ENCODE measurements at regions of chr4 and their contacts with region 1.

Region 1: DNA sequence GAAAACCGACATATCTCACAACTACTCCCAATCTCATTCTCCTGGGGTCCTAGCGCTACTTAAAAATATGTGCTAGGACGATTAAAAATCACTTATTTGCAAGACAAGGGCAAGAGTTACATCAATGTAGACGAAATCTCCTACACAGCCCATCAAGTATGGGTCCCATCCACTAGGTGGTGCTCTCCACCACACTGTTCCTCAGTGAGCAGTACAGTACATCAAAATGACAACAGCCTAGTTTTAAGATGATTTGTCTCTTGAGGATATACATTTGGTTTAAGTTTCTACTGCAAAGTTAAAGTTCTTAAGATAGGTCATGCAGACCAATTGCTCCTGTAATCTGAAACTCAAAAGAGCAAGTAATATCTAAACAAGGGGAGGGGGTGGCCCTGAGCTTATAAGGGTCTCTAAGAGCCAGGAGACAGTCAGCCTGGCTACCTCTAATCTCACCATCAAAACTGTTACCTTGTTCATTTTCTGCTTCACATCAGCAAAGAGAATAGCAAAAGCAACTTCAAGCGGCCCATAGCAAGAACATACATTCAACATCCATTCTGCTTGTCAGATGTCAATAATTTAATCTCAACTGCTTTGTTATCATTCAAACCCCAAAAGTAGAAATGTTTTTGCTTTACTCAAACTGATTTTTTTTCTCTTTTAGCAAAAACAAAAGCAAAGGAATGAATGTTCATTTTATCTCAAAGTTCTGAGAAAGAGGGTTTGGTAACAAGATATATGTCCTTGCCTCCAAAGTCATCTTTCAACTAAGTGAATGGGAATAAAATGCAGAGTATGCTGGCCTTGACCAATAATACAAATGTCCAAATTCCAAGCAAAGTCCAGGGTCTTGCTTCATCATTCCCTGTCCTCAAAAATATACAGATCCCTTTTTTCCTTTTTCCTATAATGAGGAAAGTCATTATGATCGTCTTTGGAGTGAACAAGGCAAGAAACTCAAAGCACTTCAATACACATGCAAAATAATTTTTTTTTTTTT is 53.1 kb downstream of the STX18 start:
- DNase-seq: peak; percentile 88
- H3K4me3 Mint-ChIP-seq: no peak overlapping the region
- H3K27ac Mint-ChIP-seq: no peak overlapping the region
- H3K4me1 Mint-ChIP-seq: peaks cover 8% of the 10 kb centered on the region
- H3K27me3 Mint-ChIP-seq: no peaks in the 10 kb centered on the region

Region 2: DNA sequence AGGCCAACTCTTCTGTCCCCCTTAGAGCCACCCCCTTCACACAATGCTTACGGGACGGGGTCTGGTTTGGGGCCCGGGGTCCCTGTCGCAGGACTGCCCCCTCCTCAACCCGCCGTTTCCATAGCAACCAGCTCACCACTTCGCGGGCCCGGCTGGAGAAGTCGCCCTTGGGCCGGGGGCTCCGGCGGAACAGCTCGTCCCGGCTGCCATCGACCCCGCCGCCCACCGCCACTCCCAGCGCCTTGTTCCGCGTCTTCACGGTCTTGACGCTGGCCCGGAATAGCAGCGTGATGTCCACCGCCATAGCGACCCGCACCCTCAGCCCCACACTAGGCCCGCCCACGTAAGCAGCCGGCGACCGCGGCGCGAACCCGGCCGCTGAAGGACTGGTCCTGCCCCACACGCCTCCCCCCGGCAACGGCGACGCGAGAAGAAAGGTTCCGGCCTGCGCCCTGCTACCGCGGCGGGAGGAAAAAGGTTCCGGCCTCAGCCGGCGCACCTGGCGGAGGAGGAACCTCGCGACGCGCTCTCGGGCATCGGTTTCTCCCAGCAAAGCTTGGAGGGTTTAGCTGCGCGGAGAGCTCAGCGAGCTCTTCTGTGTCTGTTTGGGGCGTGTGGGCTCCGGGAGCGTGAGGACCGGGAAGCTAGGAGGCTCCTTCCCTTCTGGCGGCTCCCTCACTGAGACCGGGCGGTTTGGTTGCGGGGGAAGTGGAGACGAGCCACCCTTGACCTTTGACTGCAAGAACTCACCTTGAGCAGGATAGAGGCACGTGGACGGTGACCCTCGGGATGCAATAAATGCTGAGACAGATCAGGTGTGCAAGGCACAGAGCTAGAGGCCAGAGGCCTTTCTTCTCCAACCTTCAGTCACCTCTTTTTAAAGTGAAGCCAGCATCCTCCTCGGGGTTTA is 53.2 kb after region 1 on chr4 and contains the start of gene STX18:
- CTCF ChIA-PET with region 1: no interaction called
- intact Hi-C with region 1: loop called (anchors 2 kb)
- DNase-seq: peak; percentile 89
- H3K4me3 Mint-ChIP-seq: peak within 1 kb of the TSS; percentile 92
- H3K27ac Mint-ChIP-seq: peak within 1 kb of the TSS; percentile 87
- H3K4me1 Mint-ChIP-seq: peaks cover 43% of the 10 kb centered on the region
- H3K27me3 Mint-ChIP-seq: no peaks in the 10 kb centered on the region
- total RNA-seq, gene STX18: 18.3 to 19.0 TPM

Region 3: DNA sequence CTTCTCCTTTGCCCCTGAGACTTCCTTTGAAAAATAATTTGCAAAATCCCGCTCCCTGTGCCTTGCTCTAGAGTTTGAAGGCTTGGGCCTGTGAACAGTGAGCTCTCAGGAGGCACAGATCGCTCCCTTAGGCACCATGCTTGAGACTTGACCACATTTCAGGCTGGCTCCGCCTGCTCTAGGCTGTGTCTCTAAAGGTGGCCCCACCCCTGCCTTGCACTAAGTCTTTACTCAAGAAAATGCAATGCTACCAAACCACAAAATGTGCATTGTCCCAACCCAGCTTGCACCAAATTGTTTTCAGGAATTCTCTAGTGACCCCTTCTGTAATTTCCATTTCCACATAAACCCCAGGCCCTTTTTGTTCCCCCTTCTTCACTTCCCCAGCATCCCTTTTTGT is 80.3 kb after region 1 on chr4:
- CTCF ChIA-PET with region 1: no interaction called
- intact Hi-C with region 1: no loop called
- DNase-seq: no peak
- H3K4me3 Mint-ChIP-seq: no peak overlapping the region
- H3K27ac Mint-ChIP-seq: no peak overlapping the region
- H3K4me1 Mint-ChIP-seq: no peaks in the 10 kb centered on the region
- H3K27me3 Mint-ChIP-seq: no peaks in the 10 kb centered on the region

Region 4: GRCh38 chr4:4659871-4660651 is 171.4 kb after region 1 on chr4:
- CTCF ChIA-PET with region 1: no interaction called
- intact Hi-C with region 1: loop called (anchors 10 kb)
- DNase-seq: no peak
- H3K4me3 Mint-ChIP-seq: no peak overlapping the region
- H3K27ac Mint-ChIP-seq: no peak overlapping the region
- H3K4me1 Mint-ChIP-seq: no peaks in the 10 kb centered on the region
- H3K27me3 Mint-ChIP-seq: no peaks in the 10 kb centered on the region

Region 5: GRCh38 chr4:4880492-4880891 is 391.8 kb after region 1 on chr4:
- CTCF ChIA-PET with region 1: no interaction called
- intact Hi-C with region 1: loop called (anchors 1 kb)
- DNase-seq: no peak
- H3K4me3 Mint-ChIP-seq: no peak overlapping the region
- H3K27ac Mint-ChIP-seq: no peak overlapping the region
- H3K4me1 Mint-ChIP-seq: no peaks in the 10 kb centered on the region
- H3K27me3 Mint-ChIP-seq: peaks cover 33% of the 10 kb centered on the region

Region 6: DNA sequence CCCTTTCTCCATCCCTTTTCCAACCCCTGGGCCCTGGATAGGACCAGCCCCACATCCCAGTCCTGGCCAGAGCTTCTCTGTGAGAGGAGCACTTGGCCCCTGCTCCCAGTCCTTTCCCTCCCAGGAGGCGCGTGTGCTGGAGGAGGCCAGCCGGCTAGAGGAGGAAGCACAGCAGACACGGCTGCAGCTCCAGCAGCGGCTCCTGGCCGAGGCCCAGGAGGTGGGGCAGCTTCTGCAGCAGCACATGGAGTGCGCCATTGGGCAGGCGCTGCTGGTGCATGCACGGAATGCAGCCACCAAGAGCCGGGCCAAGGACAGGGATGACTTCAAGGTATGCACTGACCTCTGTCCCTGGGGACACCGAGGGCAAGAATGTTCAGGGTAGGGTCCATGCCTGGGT is 1309.8 kb after region 1 on chr4:
- CTCF ChIA-PET with region 1: no interaction called
- intact Hi-C with region 1: loop called (anchors 10 kb)
- DNase-seq: no peak
- H3K4me3 Mint-ChIP-seq: no peak overlapping the region
- H3K27ac Mint-ChIP-seq: no peak overlapping the region
- H3K4me1 Mint-ChIP-seq: no peaks in the 10 kb centered on the region
- H3K27me3 Mint-ChIP-seq: no peaks in the 10 kb centered on the region